ENCODE measurements at regions of chr15 and their contacts with region 1.

Region 1: DNA sequence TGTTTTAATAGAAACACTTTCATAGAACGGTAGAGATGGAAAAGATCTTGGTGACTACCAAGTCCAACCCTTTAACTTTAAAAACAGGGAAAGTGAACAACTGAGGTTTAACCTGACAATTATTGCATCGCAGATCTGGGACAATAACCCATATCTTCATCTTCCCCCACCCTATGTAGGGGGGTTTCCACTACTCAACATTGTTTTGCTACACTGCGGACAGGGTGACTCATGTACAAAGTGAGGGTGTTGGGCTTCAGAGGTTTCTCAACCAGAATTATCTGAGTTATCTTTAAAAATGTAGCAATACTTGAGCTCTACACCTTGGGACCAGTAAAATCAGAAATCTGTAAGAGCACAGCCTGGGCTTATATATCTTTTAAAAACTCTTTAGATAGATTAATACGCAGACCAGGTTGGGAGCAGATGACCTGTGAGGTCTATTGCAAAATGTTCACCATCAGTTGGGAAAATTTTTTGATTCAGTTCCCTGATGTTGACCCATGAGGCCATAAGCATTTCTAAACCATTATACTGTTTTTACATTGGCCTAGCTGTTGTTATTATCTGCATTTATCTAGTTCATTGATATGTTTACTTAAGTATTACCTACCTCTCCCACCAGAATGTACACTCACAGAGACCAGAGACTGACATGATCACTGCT is 103.6 kb upstream of the ICE2 start:
- DNase-seq: no peak
- H3K4me3 ChIP-seq: no peak overlapping the region
- CTCF ChIP-seq: no peak
- POLR2A ChIP-seq: no peak

Region 2: DNA sequence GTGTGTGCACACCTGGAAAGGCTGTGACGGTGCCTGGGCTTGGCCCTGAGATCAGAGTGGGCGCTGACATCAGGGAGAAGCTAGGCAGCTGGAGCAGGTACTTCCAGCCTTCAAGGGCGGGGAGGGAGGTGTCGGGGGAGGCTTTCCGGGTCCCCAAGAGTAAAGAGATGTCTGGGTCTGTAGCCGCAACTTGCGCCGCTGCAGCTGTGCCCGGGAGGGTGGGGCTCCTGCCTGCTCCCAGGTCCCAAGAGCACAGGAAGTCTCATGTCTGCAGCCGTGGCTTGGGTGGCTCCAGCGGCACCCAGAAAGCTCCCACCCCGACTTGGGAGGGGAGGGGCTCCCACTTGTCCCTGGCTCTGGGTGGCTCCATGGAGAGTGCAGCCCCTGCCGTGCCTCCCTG is 790.1 kb before region 1 on chr15:
- intact Hi-C with region 1: no loop called
- DNase-seq: no peak
- H3K4me3 ChIP-seq: no peak overlapping the region
- CTCF ChIP-seq: no peak
- POLR2A ChIP-seq: no peak

Region 3: DNA sequence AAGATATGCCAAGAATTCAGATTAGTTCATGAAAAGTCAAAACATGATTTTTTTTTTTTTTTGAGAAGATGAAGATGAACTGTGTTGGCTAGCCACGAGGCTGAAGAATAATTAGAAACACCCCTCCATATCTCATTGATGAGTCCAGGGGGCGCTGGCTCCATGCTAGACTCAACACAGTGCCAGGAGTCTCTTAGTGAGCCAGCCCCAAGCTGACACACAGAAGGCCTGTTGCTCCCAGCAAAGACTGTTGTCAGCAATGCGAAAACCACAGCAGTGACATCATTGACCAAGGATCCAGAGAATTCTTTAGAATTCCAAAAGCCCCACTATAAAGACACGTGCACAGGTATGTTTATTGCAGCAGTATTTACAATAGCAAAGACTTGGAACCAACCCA is 370.0 kb before region 1 on chr15:
- intact Hi-C with region 1: no loop called
- DNase-seq: no peak
- H3K4me3 ChIP-seq: no peak overlapping the region
- CTCF ChIP-seq: no peak
- POLR2A ChIP-seq: no peak

Region 4: GRCh38 chr15:60859996-60860494 is 277.5 kb after region 1 on chr15:
- intact Hi-C with region 1: no loop called
- DNase-seq: no peak
- H3K4me3 ChIP-seq: no peak overlapping the region
- CTCF ChIP-seq: no peak
- POLR2A ChIP-seq: no peak

Region 5: GRCh38 chr15:60916679-60917460 is 334.4 kb after region 1 on chr15:
- intact Hi-C with region 1: loop called (anchors 5 kb)
- DNase-seq: peak; percentile 89 to 97
- H3K4me3 ChIP-seq: no peak overlapping the region
- CTCF ChIP-seq: peak in 1 of 3 donors; percentile 52
- POLR2A ChIP-seq: no peak

Measured in lower leg skin (tissue), 4 donors.